ENCODE measurements at regions of chr12 and their contacts with region 1.

Region 1: DNA sequence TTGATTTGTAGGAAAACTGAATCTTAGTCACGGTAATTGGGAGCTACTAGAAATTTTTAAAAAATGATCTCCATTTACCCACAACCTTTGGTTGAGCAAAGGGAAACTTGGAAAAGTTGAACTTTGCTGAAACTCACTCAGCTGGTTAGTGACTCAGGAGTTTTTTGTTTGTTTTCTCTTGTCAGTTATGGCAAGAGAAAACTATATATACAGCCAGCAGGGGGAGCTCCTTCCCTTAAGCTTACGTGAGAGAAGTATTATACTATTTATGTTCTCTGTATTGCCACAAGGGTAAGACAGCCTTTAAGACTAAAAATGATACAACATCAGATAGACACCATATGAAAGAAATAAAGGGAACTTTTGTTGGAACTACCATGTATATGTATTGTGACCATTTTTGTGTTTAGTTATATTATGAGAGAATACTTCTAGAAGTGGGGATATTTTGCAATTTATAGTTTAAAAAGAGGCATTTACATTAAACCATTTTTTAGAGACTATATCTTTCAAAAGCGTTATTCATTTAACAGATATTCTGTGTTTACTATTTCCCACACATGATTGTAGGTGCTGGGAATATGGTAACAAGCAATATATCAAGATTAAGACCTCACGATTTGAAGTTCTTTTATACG is 28.1 kb upstream of the TBC1D30 start:
- DNase-seq: peak; percentile 82
- ATAC-seq: peak; percentile 93
- H3K4me3 Mint-ChIP-seq: no peak overlapping the region
- H3K27ac Mint-ChIP-seq: no peak overlapping the region
- H3K4me1 Mint-ChIP-seq: no peaks in the 10 kb centered on the region
- H3K27me3 Mint-ChIP-seq: peaks cover 11% of the 10 kb centered on the region
- CTCF ChIP-seq: peak; percentile 90

Region 2: DNA sequence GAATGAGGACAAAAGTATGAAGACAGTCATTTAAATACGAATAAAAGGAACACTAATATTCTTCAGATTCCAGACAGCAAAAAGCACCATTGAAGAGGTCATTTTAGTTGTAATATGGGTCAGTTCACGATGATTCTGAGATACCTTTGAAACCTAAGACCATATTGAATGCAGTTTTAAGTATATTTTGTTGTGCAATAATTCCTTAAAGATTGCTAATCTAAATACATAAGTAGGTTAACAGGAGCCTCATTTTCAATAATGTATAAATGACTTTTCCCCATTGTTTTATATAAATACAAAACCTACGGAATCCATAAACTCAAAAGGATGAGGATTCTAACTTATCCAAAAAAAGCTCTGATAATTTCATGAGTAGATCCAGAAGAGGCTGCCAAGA is 42.9 kb before region 1 on chr12:
- CTCF ChIA-PET with region 1: no interaction called
- POLR2A ChIA-PET with region 1: no interaction called
- intact Hi-C with region 1: no loop called
- DNase-seq: no peak
- ATAC-seq: no peak
- H3K4me3 Mint-ChIP-seq: no peak overlapping the region
- H3K27ac Mint-ChIP-seq: no peak overlapping the region
- H3K4me1 Mint-ChIP-seq: peaks cover 35% of the 10 kb centered on the region
- H3K27me3 Mint-ChIP-seq: no peaks in the 10 kb centered on the region
- CTCF ChIP-seq: no peak

Region 3: GRCh38 chr12:64773386-64773785 is 22.9 kb before region 1 on chr12:
- CTCF ChIA-PET with region 1: interaction called, 10 read pairs
- POLR2A ChIA-PET with region 1: no interaction called
- intact Hi-C with region 1: no loop called
- DNase-seq: no peak
- ATAC-seq: no peak
- H3K4me3 Mint-ChIP-seq: no peak overlapping the region
- H3K27ac Mint-ChIP-seq: no peak overlapping the region
- H3K4me1 Mint-ChIP-seq: no peaks in the 10 kb centered on the region
- H3K27me3 Mint-ChIP-seq: peaks cover 39% of the 10 kb centered on the region
- CTCF ChIP-seq: no peak

Region 4: GRCh38 chr12:64780531-64781279 is 15.6 kb before region 1 on chr12:
- CTCF ChIA-PET with region 1: interaction called, 36 read pairs
- POLR2A ChIA-PET with region 1: no interaction called
- intact Hi-C with region 1: no loop called
- DNase-seq: peak; percentile 16
- ATAC-seq: peak; percentile 62
- H3K4me3 Mint-ChIP-seq: peak overlapping the region; percentile 63
- H3K27ac Mint-ChIP-seq: no peak overlapping the region
- H3K4me1 Mint-ChIP-seq: peaks cover 9% of the 10 kb centered on the region
- H3K27me3 Mint-ChIP-seq: peaks cover 62% of the 10 kb centered on the region
- CTCF ChIP-seq: no peak

Region 5: DNA sequence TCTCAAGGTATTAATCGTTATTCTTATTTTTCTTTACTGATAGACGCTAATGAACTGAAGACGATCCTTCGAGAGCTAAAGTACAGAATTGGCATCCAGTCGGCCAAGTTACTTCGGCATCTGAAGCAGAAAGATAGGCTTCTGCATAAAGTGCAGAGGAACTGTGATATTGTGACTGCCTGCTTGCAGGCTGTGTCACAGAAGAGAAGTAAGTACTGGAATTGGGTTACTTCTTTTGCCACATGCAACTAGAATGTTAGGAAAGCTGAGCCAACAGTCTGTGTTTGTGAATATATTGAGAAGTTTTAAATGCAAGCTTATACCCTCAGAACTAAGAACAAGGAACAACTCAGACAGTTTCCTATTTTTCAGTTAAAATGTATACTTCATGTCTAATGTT is 10.5 kb before region 1 on chr12:
- CTCF ChIA-PET with region 1: interaction called, 36 read pairs
- POLR2A ChIA-PET with region 1: no interaction called
- intact Hi-C with region 1: no loop called
- DNase-seq: no peak
- ATAC-seq: no peak
- H3K4me3 Mint-ChIP-seq: no peak overlapping the region
- H3K27ac Mint-ChIP-seq: no peak overlapping the region
- H3K4me1 Mint-ChIP-seq: peaks cover 9% of the 10 kb centered on the region
- H3K27me3 Mint-ChIP-seq: peaks cover 27% of the 10 kb centered on the region
- CTCF ChIP-seq: no peak

Region 6: DNA sequence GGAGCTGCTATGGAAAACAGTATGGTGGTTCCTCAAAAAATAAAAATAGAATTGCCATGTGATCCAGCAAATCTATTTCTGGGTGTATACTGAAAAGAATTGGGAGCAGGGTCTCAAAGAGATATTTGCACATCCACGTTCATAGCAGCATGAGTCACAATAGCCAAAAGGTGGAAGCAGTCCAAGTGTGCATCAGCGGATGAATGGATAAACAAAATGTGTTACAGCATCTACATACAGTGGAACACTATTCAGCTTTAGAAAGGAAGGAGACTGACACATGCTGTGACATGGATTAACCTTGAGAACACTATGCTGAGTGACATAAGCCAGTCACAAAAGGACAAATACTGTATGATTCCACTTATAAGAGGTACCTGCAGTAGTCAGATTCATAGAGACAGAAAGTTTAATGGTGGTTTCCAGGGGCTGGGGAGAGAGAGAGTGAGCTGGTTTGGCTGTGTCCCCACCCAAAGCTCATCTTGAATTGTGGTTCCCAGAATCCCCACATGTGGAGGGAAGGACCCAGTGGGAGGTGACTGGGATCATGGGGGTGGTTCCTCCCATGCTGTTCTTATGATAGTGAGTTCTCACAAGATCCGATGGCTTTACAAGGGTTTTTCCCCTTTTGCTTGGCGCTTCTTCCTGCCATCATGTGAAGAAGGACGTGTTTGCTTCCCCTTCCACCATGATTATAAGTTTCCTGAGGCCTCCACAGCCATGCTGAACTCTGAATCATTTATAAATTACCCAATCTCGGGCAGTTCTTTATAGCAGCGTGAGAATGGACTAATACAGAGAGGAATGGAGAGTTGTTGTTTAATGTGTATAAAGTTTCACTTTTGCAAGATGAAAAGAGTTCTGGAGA is 10.5 kb after region 1 on chr12:
- CTCF ChIA-PET with region 1: interaction called, 18 read pairs
- POLR2A ChIA-PET with region 1: no interaction called
- intact Hi-C with region 1: no loop called
- DNase-seq: no peak
- ATAC-seq: no peak
- H3K4me3 Mint-ChIP-seq: no peak overlapping the region
- H3K27ac Mint-ChIP-seq: no peak overlapping the region
- H3K4me1 Mint-ChIP-seq: peaks cover 4% of the 10 kb centered on the region
- H3K27me3 Mint-ChIP-seq: peaks cover 49% of the 10 kb centered on the region
- CTCF ChIP-seq: no peak

Region 7: GRCh38 chr12:64814432-64814831 is 18.1 kb after region 1 on chr12:
- CTCF ChIA-PET with region 1: interaction called, 20 read pairs
- POLR2A ChIA-PET with region 1: no interaction called
- intact Hi-C with region 1: no loop called
- DNase-seq: no peak
- ATAC-seq: no peak
- H3K4me3 Mint-ChIP-seq: no peak overlapping the region
- H3K27ac Mint-ChIP-seq: no peak overlapping the region
- H3K4me1 Mint-ChIP-seq: no peaks in the 10 kb centered on the region
- H3K27me3 Mint-ChIP-seq: peaks cover 22% of the 10 kb centered on the region
- CTCF ChIP-seq: no peak

Measured in activated CD8-positive, alpha-beta T cell treated with anti-CD3 and anti-CD28 coated beads for 36 hours (primary cell).